Psoas muscle (tissue), 8 donors: ENCODE measurements at regions of chr2 and their contacts with region 1.

Region 1: GRCh38 chr2:210002158-210003157 is at the start of gene RPE:
- DNase-seq: peak; percentile 97 to 99
- ATAC-seq: peak; percentile 99 to 100 (median 100)
- H3K4me3 ChIP-seq: peak within 1 kb of the TSS; percentile 97
- H3K27ac ChIP-seq: peak within 1 kb of the TSS; percentile 81
- H3K4me1 ChIP-seq: peaks cover 35% of the 10 kb centered on the region
- H3K27me3 ChIP-seq: no peaks in the 10 kb centered on the region
- CTCF ChIP-seq: no peak
- total RNA-seq, gene RPE: 12.4 to 23.3 (median 16.5) TPM

Region 2: GRCh38 chr2:209901172-209901571 is 101.3 kb before region 1 on chr2:
- intact Hi-C with region 1: no loop called
- DNase-seq: no peak
- ATAC-seq: no peak
- H3K4me3 ChIP-seq: no peak overlapping the region
- H3K27ac ChIP-seq: no peak overlapping the region
- H3K4me1 ChIP-seq: no peaks in the 10 kb centered on the region
- H3K27me3 ChIP-seq: no peaks in the 10 kb centered on the region
- CTCF ChIP-seq: no peak

Region 3: DNA sequence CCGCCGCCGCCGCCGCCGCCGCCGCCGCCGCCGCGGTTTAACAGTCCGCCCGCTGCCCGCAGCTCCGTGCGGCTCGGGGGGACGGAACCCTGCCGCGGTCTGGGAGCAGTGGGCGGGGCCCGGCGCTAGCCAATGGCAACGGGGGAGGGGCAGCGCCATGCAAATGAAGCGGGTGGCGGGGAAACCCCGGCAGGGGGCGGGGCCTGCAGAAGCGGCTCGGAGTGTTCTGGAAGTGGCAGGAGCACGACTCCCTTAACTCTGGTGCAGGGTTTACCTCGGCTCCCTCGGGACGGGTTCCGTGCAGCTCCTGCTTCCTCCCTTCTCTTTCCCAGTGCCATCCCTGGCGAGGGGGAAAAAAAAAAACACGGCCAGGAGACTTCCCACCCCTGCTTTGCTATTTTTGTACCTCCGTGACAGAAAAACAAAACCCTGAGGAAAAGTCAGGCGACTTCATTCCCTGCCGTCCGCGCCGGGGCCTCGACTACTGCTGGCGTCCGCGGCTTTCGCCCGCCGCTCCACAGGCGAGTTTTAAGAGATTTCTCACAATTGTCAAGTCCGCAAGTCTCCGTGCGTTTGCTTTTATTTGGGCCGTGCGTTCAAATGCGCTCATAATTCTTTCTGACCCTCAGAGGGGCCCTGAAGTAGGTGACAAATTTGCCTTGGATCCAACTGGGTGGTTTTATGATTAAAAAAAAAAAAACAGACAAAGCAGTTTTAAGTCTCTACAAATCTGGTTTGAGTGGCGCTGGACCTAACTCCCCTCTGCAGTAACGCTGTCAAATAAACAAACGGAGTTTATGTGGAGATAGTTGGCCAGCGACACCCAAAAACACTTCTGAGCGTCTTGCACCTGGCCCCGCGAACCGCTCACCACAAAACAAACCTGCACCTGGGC is 169.1 kb after region 1 on chr2 and contains the start of gene KANSL1L:
- intact Hi-C with region 1: loop called in 1 of 2 experiments (anchors 10 kb)
- DNase-seq: peak; percentile 99
- ATAC-seq: peak; percentile 91 to 95 (median 94)
- H3K4me3 ChIP-seq: peak within 1 kb of the TSS; percentile 86
- H3K27ac ChIP-seq: peak within 1 kb of the TSS; percentile 99
- H3K4me1 ChIP-seq: peaks cover 32% of the 10 kb centered on the region
- H3K27me3 ChIP-seq: no peaks in the 10 kb centered on the region
- CTCF ChIP-seq: no peak
- total RNA-seq, gene KANSL1L: 11.4 to 21.5 (median 15.5) TPM